Ascending aorta (tissue), 2 donors: ENCODE measurements at regions of chr3 and their contacts with region 1.

Region 1: GRCh38 chr3:197906023-197906849 is 43.8 kb upstream of the RPL35A start:
- DNase-seq: peak; percentile 43 to 94
- H3K4me3 ChIP-seq: no peak overlapping the region
- H3K27ac ChIP-seq: peak overlapping the region; percentile 20 to 29
- H3K4me1 ChIP-seq: no peaks in the 10 kb centered on the region
- H3K27me3 ChIP-seq: no peaks in the 10 kb centered on the region
- CTCF ChIP-seq: peak; percentile 81 to 92 (median 91)

Region 2: GRCh38 chr3:197820550-197821335 is 85.5 kb before region 1 on chr3:
- intact Hi-C with region 1: no loop called
- DNase-seq: no peak
- H3K4me3 ChIP-seq: no peak overlapping the region
- H3K27ac ChIP-seq: no peak overlapping the region
- H3K4me1 ChIP-seq: peaks cover 0 to 2% of the 10 kb centered on the region in 2 donors
- H3K27me3 ChIP-seq: no peaks in the 10 kb centered on the region
- CTCF ChIP-seq: no peak

Region 3: DNA sequence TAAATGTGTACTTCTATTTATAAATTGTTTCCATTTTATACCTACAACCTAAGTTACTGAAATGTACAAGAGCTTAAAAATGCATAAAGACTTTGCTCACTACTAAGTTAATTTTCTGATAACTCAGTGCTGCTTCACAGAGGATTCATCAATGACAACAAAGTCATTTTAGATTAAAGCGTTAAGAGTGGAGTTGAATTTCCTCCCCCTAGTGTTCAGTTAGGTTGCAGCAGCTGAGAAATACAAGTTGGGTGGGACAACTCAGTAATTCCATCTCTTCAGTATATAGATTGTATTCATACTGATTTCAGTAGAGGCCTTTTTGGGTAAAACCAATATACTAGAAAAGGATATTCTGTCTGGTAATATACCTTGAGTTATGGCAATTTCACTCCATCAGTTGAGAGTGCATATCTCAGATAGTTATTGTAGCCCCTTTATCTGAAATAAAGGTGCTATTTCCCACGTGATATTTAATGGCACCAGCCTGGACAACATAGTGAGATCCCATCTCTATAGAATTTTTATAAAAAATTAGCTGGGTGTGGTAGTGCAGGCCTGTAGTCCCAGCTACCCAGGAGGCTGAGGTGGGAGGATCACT is 36.8 kb after region 1 on chr3:
- intact Hi-C with region 1: loop called (anchors 1 kb)
- DNase-seq: peak in 1 of 2 donors; percentile 2
- H3K4me3 ChIP-seq: no peak overlapping the region
- H3K27ac ChIP-seq: no peak overlapping the region
- H3K4me1 ChIP-seq: no peaks in the 10 kb centered on the region
- H3K27me3 ChIP-seq: no peaks in the 10 kb centered on the region
- CTCF ChIP-seq: peak; percentile 24 to 63 (median 62)